ENCODE measurements at regions of chr2 and their contacts with region 1.

Region 1: DNA sequence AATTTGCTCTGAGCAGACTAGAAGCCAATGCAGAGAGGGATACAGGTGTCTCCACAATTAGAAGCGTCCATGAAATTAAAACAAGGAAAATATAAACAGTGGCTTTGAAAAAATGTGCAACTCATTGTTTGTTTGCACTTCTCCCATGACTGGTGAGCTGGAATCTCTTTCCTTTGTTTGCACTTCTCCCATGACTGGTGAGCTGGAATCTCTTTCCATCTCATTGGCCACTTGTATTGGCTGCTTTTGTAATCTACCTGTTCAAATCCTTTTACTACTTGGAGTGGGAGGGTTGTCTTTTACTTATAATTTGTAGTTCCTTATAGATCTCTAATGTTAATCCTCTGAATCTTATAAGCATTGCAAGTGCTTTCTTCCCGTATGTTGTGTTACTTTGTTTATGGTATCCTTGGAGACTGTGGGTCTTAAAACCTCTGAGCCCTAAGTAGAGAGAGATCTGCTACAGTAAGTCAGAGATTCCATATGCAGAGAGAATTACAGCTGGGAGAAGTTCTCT is 94.1 kb downstream of the RTN4 start:
- DNase-seq: peak in 3 of 4 experiments; percentile 28 to 32 (median 32)
- ATAC-seq: peak; percentile 25
- H3K4me3 ChIP-seq: no peak overlapping the region
- H3K27ac ChIP-seq: peak overlapping the region; percentile 93
- H3K4me1 ChIP-seq: peaks cover 35 to 52% of the 10 kb centered on the region in 2 experiments
- H3K27me3 ChIP-seq: no peaks in the 10 kb centered on the region; a peak in 1 of 5 replicates
- CTCF ChIP-seq: no peak
- EP300 ChIP-seq: peak; percentile 15; the same call in 1 of the 2 replicates
- POLR2A ChIP-seq: no peak
- RAD21 ChIP-seq: no peak

Region 2: DNA sequence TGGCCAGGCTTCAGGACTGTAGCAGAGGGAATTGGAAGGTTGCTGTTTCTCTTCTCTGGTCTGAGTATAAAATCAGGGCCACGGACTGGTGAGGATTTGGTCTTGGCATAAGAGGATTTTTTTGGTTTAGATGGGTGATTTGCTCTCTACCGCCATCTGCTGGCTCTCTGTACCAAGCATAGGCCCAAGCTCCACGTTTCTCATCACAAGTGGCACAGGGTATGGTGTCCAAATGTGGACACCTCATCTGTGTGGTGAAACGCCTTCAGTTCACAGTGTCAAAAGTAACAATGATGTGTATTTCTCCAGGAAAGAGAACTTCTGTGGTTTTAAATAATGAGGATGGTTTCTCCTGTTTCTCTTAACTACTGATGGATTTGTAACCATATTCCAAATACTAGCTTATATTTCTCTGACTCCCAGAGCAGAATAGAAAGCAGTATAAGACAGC is 117.6 kb before region 1 on chr2:
- CTCF ChIA-PET with region 1: no interaction called
- POLR2A ChIA-PET with region 1: no interaction called
- in situ Hi-C with region 1: no loop called
- intact Hi-C with region 1: no loop called
- DNase-seq: peak; percentile 57 to 67 (median 64)
- ATAC-seq: peak; percentile 93
- H3K4me3 ChIP-seq: no peak overlapping the region
- H3K27ac ChIP-seq: no peak overlapping the region
- H3K4me1 ChIP-seq: no peaks in the 10 kb centered on the region
- H3K27me3 ChIP-seq: peaks cover 21 to 43% of the 10 kb centered on the region in 2 experiments
- CTCF ChIP-seq: peak; percentile 63 to 81 (median 78)
- EP300 ChIP-seq: no peak
- POLR2A ChIP-seq: no peak
- RAD21 ChIP-seq: peak; percentile 65 to 77

Region 3: GRCh38 chr2:54966165-54966832 is 10.1 kb after region 1 on chr2:
- CTCF ChIA-PET with region 1: no interaction called
- POLR2A ChIA-PET with region 1: interaction called, 16 read pairs
- in situ Hi-C with region 1: no loop called
- intact Hi-C with region 1: no loop called
- DNase-seq: no peak
- ATAC-seq: peak; percentile 17
- H3K4me3 ChIP-seq: no peak overlapping the region
- H3K27ac ChIP-seq: no peak overlapping the region
- H3K4me1 ChIP-seq: peaks cover 4 to 7% of the 10 kb centered on the region in 2 experiments; a peak in 3 of 5 replicates
- H3K27me3 ChIP-seq: no peaks in the 10 kb centered on the region
- CTCF ChIP-seq: no peak
- EP300 ChIP-seq: no peak
- POLR2A ChIP-seq: no peak
- RAD21 ChIP-seq: no peak

Measured in K562 (cell line).